H1 (cell line): ENCODE measurements at regions of chr3 and their contacts with region 1.

Region 1: DNA sequence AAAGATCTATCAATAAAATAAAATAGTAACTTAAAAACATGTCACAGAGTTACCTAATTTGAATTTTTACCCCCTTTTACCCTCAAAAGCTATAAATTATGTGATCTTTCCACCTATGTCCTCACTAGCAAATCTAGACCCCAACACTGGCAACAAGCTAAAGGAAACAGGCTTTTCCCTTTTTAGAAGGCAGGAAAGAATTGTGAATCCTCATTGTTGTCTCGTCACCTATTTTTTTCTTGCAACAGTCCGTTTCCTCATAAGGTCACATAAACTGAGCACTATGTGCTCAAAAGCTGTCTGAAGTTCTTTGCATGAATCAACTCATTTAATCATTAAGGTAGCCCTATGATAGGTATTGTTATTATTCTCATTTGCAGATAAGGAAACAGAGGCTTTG is 34.6 kb upstream of the DAZL start:
- DNase-seq: no peak
- H3K4me3 ChIP-seq: no peak overlapping the region
- H3K27ac ChIP-seq: no peak overlapping the region
- H3K4me1 ChIP-seq: no peaks in the 10 kb centered on the region
- H3K27me3 ChIP-seq: no peaks in the 10 kb centered on the region
- CTCF ChIP-seq: no peak
- EP300 ChIP-seq: no peak
- POLR2A ChIP-seq: no peak
- RAD21 ChIP-seq: no peak

Region 2: DNA sequence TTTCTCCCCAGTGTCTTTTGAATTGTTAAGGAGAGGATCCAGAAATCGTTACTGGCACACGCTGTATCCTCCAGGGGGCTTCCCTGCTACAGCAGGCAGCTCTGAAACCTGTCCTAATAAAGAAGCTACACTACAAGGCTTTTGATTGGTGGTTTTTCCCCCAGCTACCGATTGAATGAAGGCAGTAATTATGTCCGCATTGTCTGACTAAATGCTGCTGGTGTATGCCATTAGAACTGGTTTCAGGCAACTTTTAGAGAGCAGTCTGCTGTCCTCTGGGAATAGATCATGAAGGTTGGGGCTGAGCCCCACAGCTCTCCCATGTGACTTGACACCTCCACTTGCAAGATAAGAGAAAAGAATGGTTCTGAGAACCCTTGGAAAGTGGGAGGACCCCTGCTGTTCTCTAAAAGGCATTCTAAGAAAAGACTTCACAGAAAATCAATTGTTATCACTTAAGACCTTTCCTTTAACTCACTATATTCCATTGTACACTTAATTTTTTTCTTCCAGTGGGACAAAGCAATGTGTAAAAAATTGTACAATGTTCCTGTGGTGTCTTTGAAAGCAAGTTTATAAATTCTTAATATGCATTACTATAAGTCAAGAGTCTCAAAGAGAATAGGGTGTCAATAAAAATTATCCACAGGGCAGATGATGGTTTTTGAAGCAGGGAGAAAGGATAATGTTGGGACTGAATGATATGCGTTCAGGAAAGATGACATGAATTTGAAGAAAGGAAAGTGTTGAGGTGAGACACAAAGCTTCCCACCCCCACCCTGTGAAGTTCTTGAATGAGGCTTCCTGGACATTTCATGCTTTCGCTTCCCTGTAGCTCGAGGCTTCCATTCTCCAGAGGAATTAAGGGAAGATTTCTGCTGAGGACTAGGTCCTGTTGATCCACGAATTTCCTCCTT is 18.5 kb after region 1 on chr3:
- CTCF ChIA-PET with region 1: interaction called, 10 read pairs
- POLR2A ChIA-PET with region 1: interaction called, 5 read pairs
- DNase-seq: no peak
- H3K4me3 ChIP-seq: peak overlapping the region in 1 of 4 experiments; percentile 28; a peak in 1 of 8 replicates
- H3K27ac ChIP-seq: peak overlapping the region; percentile 80; the same call in 1 of the 2 replicates
- H3K4me1 ChIP-seq: peaks cover 6 to 28% (median 12%) of the 10 kb centered on the region in 4 experiments; a peak in 6 of 7 replicates
- H3K27me3 ChIP-seq: no peaks in the 10 kb centered on the region
- CTCF ChIP-seq: peak; percentile 6 to 50 (median 24); a peak in 3 of 4 replicates
- EP300 ChIP-seq: peak in 1 of 2 experiments; percentile 57; a peak in 1 of 3 replicates
- POLR2A ChIP-seq: 0 out of 3 replicates have a peak, but pooled peaks of 1 of the 2 experiments have one; percentile 21
- RAD21 ChIP-seq: peak; percentile 50 to 55

Region 3: GRCh38 chr3:16743276-16743675 is 103.5 kb after region 1 on chr3:
- CTCF ChIA-PET with region 1: no interaction called
- POLR2A ChIA-PET with region 1: no interaction called
- DNase-seq: no peak
- H3K4me3 ChIP-seq: no peak overlapping the region
- H3K27ac ChIP-seq: no peak overlapping the region
- H3K4me1 ChIP-seq: no peaks in the 10 kb centered on the region
- H3K27me3 ChIP-seq: no peaks in the 10 kb centered on the region
- CTCF ChIP-seq: no peak
- EP300 ChIP-seq: no peak
- POLR2A ChIP-seq: no peak
- RAD21 ChIP-seq: no peak